ENCODE measurements at regions of chr10 and their contacts with region 1.

Region 1: GRCh38 chr10:48506147-48506917 is 98.5 kb downstream of the ARHGAP22 start:
- DNase-seq: peak; percentile 59 to 69 (median 60)
- H3K4me3 ChIP-seq: peak overlapping the region in 2 of 7 experiments; percentile 12 to 34
- H3K27ac ChIP-seq: peak overlapping the region in 1 of 2 experiments; percentile 83
- H3K4me1 ChIP-seq: peaks cover 0 to 98% (median 72%) of the 10 kb centered on the region in 4 experiments
- H3K27me3 ChIP-seq: no peaks in the 10 kb centered on the region

Region 2: GRCh38 chr10:48363617-48364355 is 142.5 kb before region 1 on chr10:
- CTCF ChIA-PET with region 1: interaction called, 50 read pairs
- POLR2A ChIA-PET with region 1: no interaction called
- DNase-seq: peak; percentile 81 to 89 (median 88)
- H3K4me3 ChIP-seq: peak overlapping the region in 2 of 7 experiments; percentile 3 to 6
- H3K27ac ChIP-seq: peak overlapping the region in 1 of 2 experiments; percentile 57
- H3K4me1 ChIP-seq: peaks cover 4 to 27% (median 16%) of the 10 kb centered on the region in 4 experiments
- H3K27me3 ChIP-seq: no peaks in the 10 kb centered on the region

Region 3: GRCh38 chr10:48431871-48432270 is 74.5 kb before region 1 on chr10:
- CTCF ChIA-PET with region 1: interaction called, 12 read pairs
- POLR2A ChIA-PET with region 1: no interaction called
- DNase-seq: peak in 2 of 3 donors; percentile 16 to 47
- H3K4me3 ChIP-seq: no peak overlapping the region
- H3K27ac ChIP-seq: peak overlapping the region in 1 of 2 experiments; percentile 4
- H3K4me1 ChIP-seq: peaks cover 0 to 3% (median 0%) of the 10 kb centered on the region in 4 experiments
- H3K27me3 ChIP-seq: no peaks in the 10 kb centered on the region

Region 4: GRCh38 chr10:48456361-48456804 is 49.9 kb before region 1 on chr10:
- CTCF ChIA-PET with region 1: interaction called, 220 read pairs
- POLR2A ChIA-PET with region 1: no interaction called
- DNase-seq: peak; percentile 70 to 91 (median 89)
- H3K4me3 ChIP-seq: peak overlapping the region in 4 of 7 experiments; percentile 23 to 49 (median 32)
- H3K27ac ChIP-seq: peak overlapping the region in 1 of 2 experiments; percentile 70
- H3K4me1 ChIP-seq: peaks cover 0 to 85% (median 63%) of the 10 kb centered on the region in 4 experiments
- H3K27me3 ChIP-seq: no peaks in the 10 kb centered on the region

Region 5: GRCh38 chr10:48463318-48464003 is 42.9 kb before region 1 on chr10:
- CTCF ChIA-PET with region 1: interaction called, 615 read pairs
- POLR2A ChIA-PET with region 1: no interaction called
- DNase-seq: peak in 2 of 3 donors; percentile 21 to 33
- H3K4me3 ChIP-seq: no peak overlapping the region
- H3K27ac ChIP-seq: peak overlapping the region; percentile 43 to 84
- H3K4me1 ChIP-seq: peaks cover 0 to 95% (median 80%) of the 10 kb centered on the region in 4 experiments
- H3K27me3 ChIP-seq: no peaks in the 10 kb centered on the region

Region 6: DNA sequence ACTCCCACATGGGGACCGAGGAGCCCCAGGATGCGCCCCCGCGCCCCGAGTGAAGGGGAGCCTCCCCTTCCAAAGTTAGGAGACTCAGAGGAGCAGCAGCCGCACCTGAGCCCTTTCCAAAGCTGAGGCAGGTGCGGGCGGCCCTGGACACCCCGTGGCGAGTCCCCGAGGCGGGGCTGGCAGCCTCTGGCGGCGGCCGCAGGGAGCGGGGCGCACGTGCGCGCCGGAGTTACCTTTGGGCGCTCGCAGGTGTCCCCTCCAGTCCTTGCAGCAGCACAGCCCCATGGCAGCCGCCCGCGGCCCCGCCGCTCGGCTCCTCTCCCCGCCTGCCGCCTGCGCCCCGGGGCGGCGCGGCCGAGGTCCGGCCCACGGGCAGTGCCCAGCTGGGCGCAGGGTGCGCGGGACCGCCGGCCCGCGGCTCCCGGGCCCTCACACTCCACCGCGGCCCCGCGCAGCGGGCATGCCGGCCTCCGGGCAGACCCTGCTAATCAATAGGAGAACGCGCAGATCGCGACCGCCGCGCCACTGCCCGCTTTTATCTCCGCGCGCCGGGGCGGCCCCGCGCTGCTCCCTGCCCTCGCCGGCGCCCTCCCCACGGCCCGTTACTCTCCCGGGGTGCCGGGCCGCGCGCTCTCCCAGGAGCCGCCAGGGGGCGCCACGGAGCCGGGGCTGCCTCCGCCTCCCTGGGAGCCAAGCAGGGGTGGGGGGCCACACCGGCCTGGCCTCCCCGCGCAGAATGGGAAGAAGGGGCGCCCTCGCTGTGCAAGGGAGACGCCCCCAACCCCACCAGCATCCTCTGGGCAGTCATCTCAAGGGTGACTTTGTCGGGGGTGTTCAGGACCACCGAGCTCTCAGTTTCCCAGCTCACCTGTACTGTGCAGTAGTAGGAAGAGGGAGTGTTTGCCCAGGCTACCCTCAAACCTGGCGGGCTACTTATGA is 17.8 kb after region 1 on chr10:
- CTCF ChIA-PET with region 1: interaction called, 30 read pairs
- POLR2A ChIA-PET with region 1: interaction called, 3 read pairs
- DNase-seq: peak; percentile 66 to 83 (median 73)
- H3K4me3 ChIP-seq: peak overlapping the region; percentile 62 to 84 (median 78)
- H3K27ac ChIP-seq: peak overlapping the region in 1 of 2 experiments; percentile 16
- H3K4me1 ChIP-seq: peaks cover 0 to 47% (median 43%) of the 10 kb centered on the region in 4 experiments
- H3K27me3 ChIP-seq: no peaks in the 10 kb centered on the region